ENCODE measurements at regions of chr13 and their contacts with region 1.

Region 1: GRCh38 chr13:72620874-72621273 is 106.6 kb downstream of the MZT1 start:
- DNase-seq: no peak
- H3K4me3 Mint-ChIP-seq: no peak overlapping the region
- H3K27ac Mint-ChIP-seq: no peak overlapping the region
- H3K4me1 Mint-ChIP-seq: no peaks in the 10 kb centered on the region
- H3K27me3 Mint-ChIP-seq: peaks cover 1% of the 10 kb centered on the region

Region 2: GRCh38 chr13:72599178-72599743 is 21.6 kb before region 1 on chr13:
- CTCF ChIA-PET with region 1: interaction called, 3 read pairs
- POLR2A ChIA-PET with region 1: no interaction called
- intact Hi-C with region 1: loop called (anchors 1 kb)
- DNase-seq: no peak
- H3K4me3 Mint-ChIP-seq: no peak overlapping the region
- H3K27ac Mint-ChIP-seq: no peak overlapping the region
- H3K4me1 Mint-ChIP-seq: no peaks in the 10 kb centered on the region
- H3K27me3 Mint-ChIP-seq: no peaks in the 10 kb centered on the region